ENCODE measurements at regions of chr17 and their contacts with region 1.

Region 1: DNA sequence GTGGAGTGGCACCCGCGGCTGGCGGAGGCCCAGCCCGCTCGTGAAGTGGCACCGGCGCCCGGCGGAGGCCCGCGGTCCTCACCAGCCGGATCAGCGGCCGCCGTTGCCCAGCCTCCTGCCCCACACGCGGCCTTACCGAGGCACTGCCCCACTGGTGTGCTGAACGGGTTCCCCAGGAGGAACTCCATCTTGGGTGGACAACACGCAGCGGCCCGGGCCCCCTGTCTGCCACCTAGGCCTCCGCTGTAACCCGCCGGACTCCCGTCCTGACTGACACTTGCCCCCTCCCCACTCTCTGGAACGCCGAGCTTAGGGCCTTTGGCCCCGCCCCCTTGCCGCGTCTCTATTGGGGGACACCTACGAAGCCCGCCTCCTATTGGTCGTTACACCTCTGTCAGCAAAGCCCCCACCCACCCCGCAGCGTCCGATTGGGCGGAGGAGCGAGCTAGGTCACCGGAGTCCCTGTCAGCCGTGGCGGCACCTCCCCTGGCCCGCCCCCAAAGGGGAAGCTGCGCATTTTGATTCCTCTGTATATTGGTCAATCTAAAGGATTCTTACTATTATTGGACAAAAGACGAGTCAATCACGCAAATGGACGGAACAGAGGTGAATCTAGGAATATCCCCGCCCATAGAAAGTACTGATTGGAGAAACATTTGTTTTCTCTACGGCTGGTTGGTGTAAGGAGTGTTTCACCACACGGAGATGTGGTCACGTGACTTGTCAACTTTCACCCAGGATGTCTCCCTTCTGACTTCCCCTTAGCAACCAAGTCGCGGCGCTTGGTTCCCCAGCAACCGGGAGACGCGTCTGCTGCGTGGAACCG is at the starts of genes DRC3 and TOM1L2:
- DNase-seq: peak; percentile 100
- H3K4me3 Mint-ChIP-seq: peak within 1 kb of the TSS; percentile 94
- H3K27ac Mint-ChIP-seq: peak within 1 kb of the TSS; percentile 89
- H3K4me1 Mint-ChIP-seq: peaks cover 35% of the 10 kb centered on the region
- H3K27me3 Mint-ChIP-seq: peaks cover 2% of the 10 kb centered on the region
- total RNA-seq, gene DRC3: not detected in 2 replicates
- total RNA-seq, gene TOM1L2: 9.3 and 10.2 TPM in 2 replicates

Region 2: GRCh38 chr17:17496189-17497064 is 475.9 kb before region 1 on chr17 and contains the start of gene RASD1:
- intact Hi-C with region 1: loop called (anchors 10 kb)
- DNase-seq: peak; percentile 74
- H3K4me3 Mint-ChIP-seq: peak within 1 kb of the TSS; percentile 78
- H3K27ac Mint-ChIP-seq: peak within 1 kb of the TSS; percentile 61
- H3K4me1 Mint-ChIP-seq: peaks cover 14% of the 10 kb centered on the region
- H3K27me3 Mint-ChIP-seq: peaks cover 14% of the 10 kb centered on the region
- total RNA-seq, gene RASD1: 10.1 and 12.9 TPM in 2 replicates

Region 3: GRCh38 chr17:17752089-17752820 is 220.1 kb before region 1 on chr17:
- intact Hi-C with region 1: loop called (anchors 1 kb)
- DNase-seq: peak; percentile 97
- H3K4me3 Mint-ChIP-seq: peak overlapping the region; percentile 91
- H3K27ac Mint-ChIP-seq: peak overlapping the region; percentile 95
- H3K4me1 Mint-ChIP-seq: peaks cover 46% of the 10 kb centered on the region
- H3K27me3 Mint-ChIP-seq: no peaks in the 10 kb centered on the region

Region 4: GRCh38 chr17:17959520-17960361 is 12.6 kb before region 1 on chr17:
- intact Hi-C with region 1: loop called (anchors 1 kb)
- DNase-seq: no peak
- H3K4me3 Mint-ChIP-seq: peak overlapping the region; percentile 85
- H3K27ac Mint-ChIP-seq: peak overlapping the region; percentile 100
- H3K4me1 Mint-ChIP-seq: peaks cover 55% of the 10 kb centered on the region
- H3K27me3 Mint-ChIP-seq: no peaks in the 10 kb centered on the region

Region 5: DNA sequence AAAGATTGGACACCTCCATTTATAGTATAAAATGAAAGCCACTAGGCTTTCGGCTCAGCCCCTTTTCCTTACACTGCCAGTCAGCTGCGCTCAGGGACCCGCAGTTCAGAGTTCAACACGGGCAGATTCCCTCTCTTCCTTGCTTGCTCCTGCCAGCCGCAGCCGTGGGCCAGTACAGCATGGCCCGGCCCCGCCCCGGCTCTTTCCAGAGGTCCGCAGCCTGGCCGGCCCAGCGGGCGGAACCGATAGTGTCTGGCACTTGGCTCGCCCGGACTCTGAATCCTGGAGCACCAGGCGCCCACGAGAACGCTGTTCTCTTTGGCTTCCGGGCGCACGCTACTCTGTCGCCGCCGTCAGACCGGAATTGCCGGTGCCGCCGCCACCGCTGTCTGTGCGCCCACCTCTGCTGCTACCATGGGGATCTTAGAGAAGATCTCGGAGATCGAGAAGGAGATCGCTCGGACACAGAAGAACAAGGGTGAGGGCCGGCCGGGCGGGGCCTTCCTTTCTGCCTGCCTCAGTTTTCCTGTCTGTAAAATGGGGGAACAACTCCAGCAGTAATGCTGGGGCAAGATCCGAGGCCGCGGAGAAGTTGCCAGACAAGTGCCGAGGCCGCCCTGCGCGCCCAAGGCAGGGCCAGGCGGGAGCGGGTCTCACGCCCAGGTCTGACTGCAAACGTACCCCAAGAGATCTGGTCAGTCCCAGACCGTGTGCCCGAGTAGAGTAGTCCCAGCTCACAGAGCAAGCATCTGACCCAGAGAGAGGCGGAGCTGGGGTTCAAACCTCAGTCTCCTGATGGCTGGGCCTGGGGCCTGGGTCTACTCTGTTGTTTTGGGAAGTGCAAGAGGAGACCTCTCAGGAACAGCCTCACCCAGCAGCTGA is 115.5 kb after region 1 on chr17 and contains the start of gene DRG2:
- intact Hi-C with region 1: loop called (anchors 1 kb)
- DNase-seq: peak; percentile 84
- H3K4me3 Mint-ChIP-seq: peak within 1 kb of the TSS; percentile 95
- H3K27ac Mint-ChIP-seq: peak within 1 kb of the TSS; percentile 96
- H3K4me1 Mint-ChIP-seq: peaks cover 17% of the 10 kb centered on the region
- H3K27me3 Mint-ChIP-seq: no peaks in the 10 kb centered on the region
- total RNA-seq, gene DRG2: 67.5 and 69.2 TPM in 2 replicates

Region 6: DNA sequence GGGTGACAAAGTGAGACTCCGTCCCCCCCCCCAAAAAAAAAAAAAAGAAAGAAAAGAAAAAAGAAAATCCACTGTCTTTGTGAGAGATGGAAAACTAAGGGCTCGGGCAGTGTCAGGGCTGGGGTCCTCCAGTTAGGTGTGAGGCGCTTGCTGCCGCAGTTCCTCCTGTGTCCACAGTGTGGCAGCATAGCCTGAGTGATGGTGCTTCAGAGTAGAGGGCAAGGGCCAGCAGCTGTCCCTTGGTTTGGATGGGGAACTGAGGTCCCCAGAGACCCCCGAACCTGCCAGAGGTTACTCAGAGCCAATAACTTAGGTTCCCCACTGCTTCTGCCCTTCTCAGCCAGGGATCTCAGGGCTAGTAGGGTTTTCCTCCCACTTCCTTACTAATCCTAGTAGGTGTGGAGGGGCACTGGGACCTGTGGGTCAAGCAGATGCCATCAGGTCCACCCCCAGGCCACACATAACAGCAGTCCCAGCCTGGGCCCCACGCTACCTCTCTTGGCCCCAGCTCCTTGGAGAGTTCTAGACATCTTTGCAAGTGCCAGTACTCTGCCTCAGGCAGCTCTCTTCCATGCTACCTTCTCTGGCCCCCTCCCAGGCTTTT is 245.2 kb after region 1 on chr17:
- intact Hi-C with region 1: no loop called
- DNase-seq: peak; percentile 65
- H3K4me3 Mint-ChIP-seq: no peak overlapping the region
- H3K27ac Mint-ChIP-seq: no peak overlapping the region
- H3K4me1 Mint-ChIP-seq: peaks cover 5% of the 10 kb centered on the region
- H3K27me3 Mint-ChIP-seq: no peaks in the 10 kb centered on the region

Region 7: DNA sequence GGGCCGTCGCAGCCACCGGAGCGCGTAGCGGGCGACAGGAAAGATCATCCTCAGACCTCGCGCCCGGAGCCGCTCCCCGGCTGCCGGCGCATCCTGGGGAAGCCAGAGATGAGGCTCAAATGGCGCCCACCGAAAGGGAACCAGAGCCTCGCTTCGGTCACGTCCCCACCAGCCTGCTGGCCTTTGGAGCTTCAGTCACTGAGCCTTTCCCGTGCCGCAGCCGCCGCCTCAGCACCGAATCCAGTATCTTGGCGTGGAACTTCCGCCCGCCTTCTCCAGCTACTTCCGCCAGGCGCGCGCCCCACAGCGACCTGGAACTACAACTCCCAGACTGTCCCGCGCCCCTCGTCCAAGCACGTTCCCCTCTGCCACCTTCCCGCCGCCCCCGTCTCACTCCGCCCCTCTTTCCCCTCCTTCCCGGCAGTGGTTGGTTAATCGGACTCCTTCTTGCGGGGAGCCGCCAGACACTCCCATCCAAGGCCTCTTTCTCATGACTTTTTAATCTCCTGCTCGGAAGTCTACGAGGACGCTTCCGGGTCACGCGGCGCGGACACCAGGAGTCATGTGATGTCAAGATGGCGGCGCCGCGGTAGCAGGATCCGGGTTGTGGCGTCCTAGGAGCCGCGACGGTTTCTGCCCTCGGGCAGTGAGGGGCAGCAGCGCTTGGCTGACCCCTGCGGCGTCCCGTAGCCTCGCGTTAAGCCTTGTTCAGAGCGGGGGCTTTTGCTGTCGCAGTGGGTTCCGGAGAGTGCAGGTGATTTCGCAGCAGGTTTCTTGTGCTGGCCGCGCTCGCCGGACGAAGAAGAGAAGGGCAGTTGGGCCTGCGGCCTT is 342.6 kb after region 1 on chr17 and contains the starts of genes SMCR8 and TOP3A:
- intact Hi-C with region 1: loop called (anchors 1 kb)
- DNase-seq: peak; percentile 95
- H3K4me3 Mint-ChIP-seq: peak within 1 kb of the TSS; percentile 93
- H3K27ac Mint-ChIP-seq: peak within 1 kb of the TSS; percentile 100
- H3K4me1 Mint-ChIP-seq: peaks cover 75% of the 10 kb centered on the region
- H3K27me3 Mint-ChIP-seq: peaks cover 2% of the 10 kb centered on the region
- total RNA-seq, gene SMCR8: 18.7 and 19.2 TPM in 2 replicates
- total RNA-seq, gene TOP3A: 75.2 and 87.2 TPM in 2 replicates